Transverse colon (tissue), 4 donors: ENCODE measurements at regions of chr12 and their contacts with region 1.

Region 1: DNA sequence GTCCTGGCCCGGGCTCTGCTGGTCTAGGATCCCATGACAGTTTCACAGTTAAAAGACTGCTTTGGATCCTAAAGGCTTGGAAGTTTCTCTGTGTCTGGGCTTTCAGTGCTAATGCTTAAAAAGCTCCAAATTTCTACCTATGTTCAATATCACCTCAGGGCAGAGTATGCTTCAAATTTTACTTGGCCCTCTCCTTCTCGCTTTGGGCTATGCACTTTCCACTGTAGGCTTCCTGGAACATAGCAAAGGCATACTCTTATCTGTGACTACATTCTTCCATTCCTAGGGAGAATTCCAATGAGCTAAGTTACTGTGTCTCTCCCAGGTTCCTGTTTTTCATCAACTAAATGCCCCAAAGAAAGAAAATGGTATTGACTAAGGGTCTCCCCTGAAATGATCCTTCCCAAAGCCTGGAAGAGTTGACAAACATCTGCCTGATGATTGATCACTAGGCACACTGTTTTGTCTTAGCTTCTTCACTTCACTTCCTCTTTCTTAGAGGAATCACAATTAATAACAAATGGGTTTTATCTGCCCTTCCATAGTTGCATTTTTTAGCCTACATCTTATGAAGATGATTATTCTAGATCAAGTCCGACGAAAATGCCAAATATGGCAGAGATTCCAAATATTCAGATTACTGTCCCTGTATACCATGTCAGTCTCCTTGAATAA is 79.5 kb downstream of the TMTC2 start:
- DNase-seq: no peak
- H3K4me3 ChIP-seq: no peak overlapping the region
- H3K27ac ChIP-seq: no peak overlapping the region
- H3K4me1 ChIP-seq: no peaks in the 10 kb centered on the region
- H3K27me3 ChIP-seq: no peaks in the 10 kb centered on the region
- CTCF ChIP-seq: no peak
- EP300 ChIP-seq: no peak
- POLR2A ChIP-seq: no peak

Region 2: GRCh38 chr12:83801972-83802371 is 1035.8 kb after region 1 on chr12:
- in situ Hi-C with region 1: no loop called
- intact Hi-C with region 1: loop called (anchors 10 kb)
- DNase-seq: no peak
- H3K4me3 ChIP-seq: no peak overlapping the region
- H3K27ac ChIP-seq: no peak overlapping the region
- H3K4me1 ChIP-seq: no peaks in the 10 kb centered on the region
- H3K27me3 ChIP-seq: no peaks in the 10 kb centered on the region
- CTCF ChIP-seq: no peak
- EP300 ChIP-seq: no peak
- POLR2A ChIP-seq: no peak